ENCODE measurements at regions of chr2 and their contacts with region 1.

Region 1: GRCh38 chr2:68185541-68186164 is 28.0 kb downstream of the PNO1 start:
- DNase-seq: peak; percentile 66
- ATAC-seq: peak; percentile 60
- H3K4me3 Mint-ChIP-seq: no peak overlapping the region
- H3K27ac Mint-ChIP-seq: no peak overlapping the region
- H3K4me1 Mint-ChIP-seq: peaks cover 10% of the 10 kb centered on the region
- H3K27me3 Mint-ChIP-seq: no peaks in the 10 kb centered on the region

Region 2: GRCh38 chr2:68169297-68169696 is 16.4 kb before region 1 on chr2:
- CTCF ChIA-PET with region 1: interaction called, 38 read pairs
- POLR2A ChIA-PET with region 1: no interaction called
- DNase-seq: peak; percentile 20
- ATAC-seq: peak; percentile 45
- H3K4me3 Mint-ChIP-seq: no peak overlapping the region
- H3K27ac Mint-ChIP-seq: no peak overlapping the region
- H3K4me1 Mint-ChIP-seq: peaks cover 8% of the 10 kb centered on the region
- H3K27me3 Mint-ChIP-seq: no peaks in the 10 kb centered on the region

Region 3: GRCh38 chr2:68282811-68283418 is 97.3 kb after region 1 on chr2:
- CTCF ChIA-PET with region 1: interaction called, 10 read pairs
- POLR2A ChIA-PET with region 1: no interaction called
- DNase-seq: peak; percentile 27
- ATAC-seq: no peak
- H3K4me3 Mint-ChIP-seq: no peak overlapping the region
- H3K27ac Mint-ChIP-seq: no peak overlapping the region
- H3K4me1 Mint-ChIP-seq: no peaks in the 10 kb centered on the region
- H3K27me3 Mint-ChIP-seq: peaks cover 52% of the 10 kb centered on the region